ENCODE measurements at regions of chr1 and their contacts with region 1.

Region 1: GRCh38 chr1:200971955-200972711 is 51.4 kb downstream of the KIF21B start:
- DNase-seq: peak; percentile 83
- H3K4me3 ChIP-seq: no peak overlapping the region
- H3K27ac ChIP-seq: no peak overlapping the region
- H3K4me1 ChIP-seq: no peaks in the 10 kb centered on the region
- H3K27me3 ChIP-seq: no peaks in the 10 kb centered on the region
- CTCF ChIP-seq: peak; percentile 82

Region 2: DNA sequence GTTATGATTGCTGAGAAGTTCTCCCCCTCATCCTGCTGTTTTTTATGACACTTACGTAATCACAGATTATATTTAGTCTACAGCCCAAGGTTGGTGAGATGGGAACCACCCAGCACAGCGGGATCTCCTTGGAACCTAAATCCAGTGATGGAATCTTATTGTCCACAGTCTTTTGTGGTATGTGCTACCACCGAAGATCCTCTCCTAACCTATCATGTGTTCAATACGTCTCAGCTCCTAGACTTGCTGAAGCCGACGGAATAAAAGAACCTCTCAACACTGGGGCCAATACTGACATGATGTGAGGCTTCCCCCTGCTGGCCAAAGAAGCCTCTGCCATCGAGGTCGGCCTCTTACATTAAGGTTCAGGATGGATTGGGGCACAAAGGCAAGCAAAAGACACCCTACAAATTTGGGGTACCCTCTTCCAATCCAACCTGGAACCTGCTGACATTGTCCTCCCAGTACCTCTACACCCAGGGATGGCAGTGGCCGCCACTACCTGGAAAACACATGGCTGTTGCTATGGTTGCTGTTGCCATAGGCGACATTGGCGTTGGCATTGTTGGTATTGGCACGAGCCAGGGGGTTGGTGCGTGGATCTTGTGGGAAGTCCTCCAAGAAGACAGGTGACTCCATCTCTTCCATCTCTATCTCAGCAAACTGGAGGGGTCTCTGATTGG is 70.8 kb after region 1 on chr1:
- CTCF ChIA-PET with region 1: interaction called, 14 read pairs
- POLR2A ChIA-PET with region 1: no interaction called
- intact Hi-C with region 1: no loop called
- DNase-seq: peak; percentile 82
- H3K4me3 ChIP-seq: no peak overlapping the region
- H3K27ac ChIP-seq: no peak overlapping the region
- H3K4me1 ChIP-seq: no peaks in the 10 kb centered on the region
- H3K27me3 ChIP-seq: no peaks in the 10 kb centered on the region
- CTCF ChIP-seq: peak; percentile 96

Region 3: DNA sequence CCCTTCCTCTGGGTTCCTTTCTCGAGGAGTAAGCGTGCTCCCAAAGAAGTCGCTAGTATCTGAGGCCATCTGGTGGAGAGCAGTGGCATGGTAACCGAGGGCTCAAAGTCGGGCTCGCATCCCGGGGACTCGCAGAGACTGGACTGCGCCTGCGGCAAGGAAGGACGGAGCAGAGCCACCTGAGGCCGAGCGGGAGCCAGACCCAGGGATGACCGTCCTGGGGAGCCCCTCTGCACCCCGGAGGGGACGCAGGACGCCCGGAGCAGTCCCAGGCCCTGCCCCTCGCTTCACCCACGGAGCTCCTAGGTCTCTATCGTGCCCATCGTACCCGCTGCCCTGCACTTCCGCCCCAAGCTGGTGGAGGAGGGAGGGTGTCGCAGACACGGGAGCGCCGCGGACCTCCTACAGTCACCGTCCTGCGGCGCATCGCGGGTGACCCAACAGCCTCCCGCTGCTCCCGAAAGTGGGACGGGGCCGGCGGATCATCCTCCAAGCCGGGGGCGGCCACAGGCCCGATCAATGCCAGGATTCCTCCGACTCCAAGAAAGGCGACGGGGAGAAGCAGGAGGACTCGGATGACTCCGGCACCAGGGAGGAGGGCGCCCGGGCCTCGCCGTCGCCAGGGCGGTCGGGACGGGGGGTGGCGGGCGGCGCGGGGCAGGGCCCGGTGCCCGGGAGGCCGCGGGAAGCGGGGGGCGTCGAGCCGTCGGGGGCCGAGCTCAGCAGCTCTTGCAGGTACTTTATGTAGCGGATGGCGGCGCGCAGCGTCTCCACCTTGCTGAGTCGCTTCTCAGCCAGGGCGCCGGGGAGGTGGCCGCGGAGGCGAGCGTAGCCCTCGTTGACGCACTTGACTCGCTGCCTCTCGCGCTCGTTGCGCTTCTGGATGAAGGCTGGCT is 142.4 kb after region 1 on chr1:
- CTCF ChIA-PET with region 1: interaction called, 42 read pairs
- POLR2A ChIA-PET with region 1: no interaction called
- intact Hi-C with region 1: loop called (anchors 1 kb)
- DNase-seq: peak; percentile 97
- H3K4me3 ChIP-seq: peak overlapping the region; percentile 64
- H3K27ac ChIP-seq: no peak overlapping the region
- H3K4me1 ChIP-seq: peaks cover 8% of the 10 kb centered on the region
- H3K27me3 ChIP-seq: no peaks in the 10 kb centered on the region
- CTCF ChIP-seq: peak; percentile 91

Region 4: GRCh38 chr1:201119206-201120197 is 147.4 kb after region 1 on chr1:
- CTCF ChIA-PET with region 1: interaction called, 42 read pairs
- POLR2A ChIA-PET with region 1: no interaction called
- intact Hi-C with region 1: loop called (anchors 1 kb)
- DNase-seq: peak; percentile 71
- H3K4me3 ChIP-seq: no peak overlapping the region
- H3K27ac ChIP-seq: no peak overlapping the region
- H3K4me1 ChIP-seq: peaks cover 4% of the 10 kb centered on the region
- H3K27me3 ChIP-seq: no peaks in the 10 kb centered on the region
- CTCF ChIP-seq: peak; percentile 82

Region 5: GRCh38 chr1:201221201-201221846 is 249.2 kb after region 1 on chr1:
- CTCF ChIA-PET with region 1: interaction called, 10 read pairs
- POLR2A ChIA-PET with region 1: no interaction called
- intact Hi-C with region 1: no loop called
- DNase-seq: no peak
- H3K4me3 ChIP-seq: no peak overlapping the region
- H3K27ac ChIP-seq: no peak overlapping the region
- H3K4me1 ChIP-seq: no peaks in the 10 kb centered on the region
- H3K27me3 ChIP-seq: no peaks in the 10 kb centered on the region
- CTCF ChIP-seq: no peak

Region 6: DNA sequence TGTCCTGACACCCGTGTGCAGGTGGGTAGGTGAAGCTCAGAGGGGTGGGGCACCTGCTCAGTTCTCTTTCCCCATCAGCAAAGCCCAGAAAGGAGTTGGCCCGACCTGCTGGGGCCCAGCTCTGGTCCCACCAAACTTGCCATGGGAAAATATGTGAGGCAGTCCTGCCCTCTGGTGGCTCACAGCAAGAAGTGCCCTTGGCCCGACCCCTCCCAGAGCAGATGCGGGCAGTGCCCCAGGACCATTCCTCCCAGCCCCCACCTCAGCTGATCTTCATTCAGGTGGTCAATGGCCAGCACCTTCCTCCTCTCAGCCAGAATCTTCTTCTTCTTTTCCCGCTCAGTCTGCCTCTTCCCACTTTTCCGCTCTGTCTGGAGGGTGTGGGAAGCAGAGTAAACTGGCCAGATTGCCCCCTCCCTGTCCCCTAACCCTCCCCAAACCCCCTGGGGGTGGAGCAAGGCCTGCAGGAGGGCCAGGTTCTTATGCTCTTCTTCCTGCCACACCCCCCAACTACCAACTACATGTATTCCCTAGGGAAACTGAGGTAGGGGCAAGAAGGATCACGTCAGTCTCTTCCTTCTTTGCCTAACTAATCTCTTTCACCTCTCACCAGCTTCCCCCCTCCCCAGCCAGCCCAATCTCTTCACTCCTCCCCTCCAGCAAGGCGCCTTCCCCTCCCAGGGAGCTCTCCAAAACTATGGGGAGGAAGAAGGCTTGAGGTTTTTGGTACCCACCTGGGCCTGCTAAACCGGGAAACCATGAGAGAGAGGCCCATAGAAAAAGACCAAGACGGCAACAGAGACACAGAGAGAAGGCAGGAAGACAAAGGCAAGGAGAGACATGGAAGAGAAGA is 389.7 kb after region 1 on chr1:
- CTCF ChIA-PET with region 1: interaction called, 4 read pairs
- POLR2A ChIA-PET with region 1: no interaction called
- intact Hi-C with region 1: loop called (anchors 5 kb)
- DNase-seq: peak; percentile 83
- H3K4me3 ChIP-seq: no peak overlapping the region
- H3K27ac ChIP-seq: no peak overlapping the region
- H3K4me1 ChIP-seq: peaks cover 17% of the 10 kb centered on the region
- H3K27me3 ChIP-seq: no peaks in the 10 kb centered on the region
- CTCF ChIP-seq: peak; percentile 93

Region 7: DNA sequence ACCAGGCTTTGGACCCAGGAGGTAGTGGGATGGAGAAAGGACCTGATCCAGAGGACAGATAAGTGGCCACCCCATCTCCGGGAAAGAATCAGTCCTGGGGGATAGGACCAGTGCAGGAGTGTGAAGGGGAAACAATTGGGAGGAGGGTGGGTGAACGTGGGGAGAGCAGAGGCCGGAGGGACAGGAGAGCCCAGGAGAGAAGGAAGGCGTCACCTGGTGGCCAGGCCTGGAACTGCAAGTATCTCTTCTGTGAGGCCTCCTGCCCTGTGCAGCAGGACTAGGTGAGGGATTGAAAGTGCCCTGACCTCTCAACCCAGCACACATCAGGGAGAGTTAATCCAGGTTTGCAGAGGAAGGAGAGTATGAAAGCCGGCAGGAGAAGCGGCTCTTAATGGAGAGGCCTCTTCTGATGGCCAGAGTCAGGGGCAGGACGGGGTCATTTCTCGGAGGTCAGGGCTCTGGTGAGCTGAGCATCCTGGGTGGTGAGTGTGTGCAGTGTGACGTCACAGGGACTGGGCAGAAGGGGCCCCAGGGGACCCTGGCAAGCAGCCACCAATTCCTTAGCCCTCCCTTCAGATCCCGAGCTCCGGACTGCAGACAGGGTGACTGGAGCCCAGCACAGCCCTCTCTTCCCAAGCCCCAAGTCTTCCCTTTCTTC is 436.2 kb after region 1 on chr1:
- CTCF ChIA-PET with region 1: no interaction called
- POLR2A ChIA-PET with region 1: no interaction called
- intact Hi-C with region 1: loop called (anchors 5 kb)
- DNase-seq: peak; percentile 84
- H3K4me3 ChIP-seq: no peak overlapping the region
- H3K27ac ChIP-seq: no peak overlapping the region
- H3K4me1 ChIP-seq: no peaks in the 10 kb centered on the region
- H3K27me3 ChIP-seq: no peaks in the 10 kb centered on the region
- CTCF ChIP-seq: peak; percentile 95